Lower leg skin (tissue), 4 donors: ENCODE measurements at regions of chr6 and their contacts with region 1.

Region 1: DNA sequence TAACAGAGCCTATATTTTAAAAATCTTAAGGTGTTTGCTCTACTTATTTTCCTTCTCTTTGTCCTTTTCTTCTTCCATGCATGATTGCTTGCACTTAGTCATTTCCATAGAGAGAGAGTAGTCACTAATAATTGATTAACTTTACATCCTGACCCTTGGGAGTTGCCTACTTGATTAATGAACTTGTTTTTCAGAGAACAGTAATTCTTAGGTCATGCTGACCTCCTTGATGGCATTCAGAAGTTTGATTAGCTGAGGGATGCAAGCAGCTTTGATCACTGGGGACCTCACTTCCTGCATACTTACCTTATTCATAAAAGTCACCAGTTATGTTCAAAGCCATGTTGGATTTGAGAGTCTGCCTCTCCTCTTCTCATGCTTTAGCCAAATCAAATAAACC is 715.6 kb upstream of the ID4 start:
- DNase-seq: no peak
- H3K4me3 ChIP-seq: no peak overlapping the region
- CTCF ChIP-seq: no peak
- POLR2A ChIP-seq: no peak

Region 2: DNA sequence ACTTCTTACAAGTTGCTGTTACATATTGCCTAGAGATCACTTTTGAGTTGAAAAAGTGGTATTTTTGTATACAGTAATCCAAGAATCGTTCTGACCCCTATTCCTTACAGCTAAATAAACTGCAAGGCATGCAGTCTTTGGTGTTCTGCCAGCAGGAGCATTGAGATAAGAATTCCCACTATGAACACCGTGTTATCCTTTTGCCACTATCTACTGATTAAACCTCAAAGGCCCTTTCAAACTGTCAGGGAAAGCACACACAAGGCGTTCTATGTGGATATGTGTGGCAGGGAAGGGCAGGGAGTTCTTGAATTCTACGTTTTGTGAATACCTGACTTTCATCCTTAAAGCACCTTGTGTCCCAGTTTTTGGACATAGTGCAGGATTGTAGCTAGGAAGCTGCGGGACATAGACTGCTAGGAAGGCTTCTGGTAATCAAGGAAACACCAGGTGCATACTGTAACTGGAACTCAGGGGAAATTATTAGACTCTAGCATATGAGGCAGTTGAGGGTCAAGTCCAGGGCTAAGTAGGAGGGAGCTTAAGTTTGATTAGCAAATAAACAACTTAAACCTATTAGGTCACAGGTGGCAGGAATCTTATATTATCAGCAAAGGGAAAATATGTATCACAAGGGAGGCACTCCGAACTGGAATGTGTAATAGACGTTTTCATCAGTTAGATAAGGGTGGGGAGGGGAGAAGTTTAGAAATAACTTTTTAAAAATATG is 227.8 kb before region 1 on chr6:
- intact Hi-C with region 1: no loop called
- DNase-seq: no peak
- H3K4me3 ChIP-seq: no peak overlapping the region
- CTCF ChIP-seq: no peak
- POLR2A ChIP-seq: no peak

Region 3: GRCh38 chr6:18904681-18905080 is 216.8 kb before region 1 on chr6:
- intact Hi-C with region 1: no loop called
- DNase-seq: no peak
- H3K4me3 ChIP-seq: no peak overlapping the region
- CTCF ChIP-seq: no peak
- POLR2A ChIP-seq: no peak

Region 4: DNA sequence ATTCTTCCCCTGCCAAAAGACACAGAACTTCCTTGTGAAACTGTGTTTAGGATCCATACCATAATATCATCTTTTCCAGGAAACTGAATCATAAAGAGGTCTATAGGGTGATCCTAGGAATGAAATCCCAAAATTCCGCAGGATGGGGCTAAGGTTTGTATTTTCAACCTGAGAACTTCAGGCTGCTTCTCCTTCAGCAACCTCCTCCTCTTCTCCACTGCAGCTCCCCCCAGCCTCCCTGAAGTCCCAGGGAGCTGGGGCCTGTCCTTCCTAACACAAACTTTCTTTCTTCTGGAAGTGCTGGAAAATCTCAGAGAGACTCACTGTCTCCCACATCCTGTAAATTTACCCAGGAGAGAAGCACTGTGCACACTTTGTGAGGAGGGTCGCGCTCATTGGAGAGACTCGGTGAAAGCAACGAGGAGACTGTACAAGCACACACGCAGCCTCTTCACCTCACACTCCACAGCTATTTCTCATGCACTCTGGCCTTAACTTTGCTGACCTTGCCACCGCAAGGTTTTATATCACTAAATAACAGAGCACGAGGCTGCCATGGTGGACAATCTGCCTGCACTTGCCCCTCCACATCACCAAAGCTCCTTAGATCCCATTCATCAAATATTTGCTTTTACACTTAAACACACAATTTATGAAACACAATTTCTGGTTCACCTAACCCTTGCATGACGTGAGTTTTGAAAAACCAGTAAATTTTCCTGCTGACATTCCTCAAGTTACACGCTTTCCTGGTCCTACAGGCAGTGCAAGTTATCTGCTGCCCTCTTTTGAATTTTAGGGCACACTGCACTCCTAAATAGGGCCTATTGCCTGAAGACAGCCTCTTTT is 729.9 kb after region 1 on chr6:
- intact Hi-C with region 1: loop called (anchors 5 kb)
- DNase-seq: no peak
- H3K4me3 ChIP-seq: no peak overlapping the region
- CTCF ChIP-seq: peak in 1 of 3 donors; percentile 55
- POLR2A ChIP-seq: no peak